Endothelial cell of umbilical vein (primary cell): ENCODE measurements at regions of chrX and their contacts with region 1.

Region 1: GRCh38 chrX:16589214-16589613 is 60.7 kb upstream of the S100G start:
- DNase-seq: peak; percentile 74
- H3K4me3 ChIP-seq: no peak overlapping the region
- H3K27ac ChIP-seq: no peak overlapping the region
- H3K4me1 ChIP-seq: peaks cover 12% of the 10 kb centered on the region
- H3K27me3 ChIP-seq: no peaks in the 10 kb centered on the region
- CTCF ChIP-seq: no peak
- POLR2A ChIP-seq: no peak

Region 2: DNA sequence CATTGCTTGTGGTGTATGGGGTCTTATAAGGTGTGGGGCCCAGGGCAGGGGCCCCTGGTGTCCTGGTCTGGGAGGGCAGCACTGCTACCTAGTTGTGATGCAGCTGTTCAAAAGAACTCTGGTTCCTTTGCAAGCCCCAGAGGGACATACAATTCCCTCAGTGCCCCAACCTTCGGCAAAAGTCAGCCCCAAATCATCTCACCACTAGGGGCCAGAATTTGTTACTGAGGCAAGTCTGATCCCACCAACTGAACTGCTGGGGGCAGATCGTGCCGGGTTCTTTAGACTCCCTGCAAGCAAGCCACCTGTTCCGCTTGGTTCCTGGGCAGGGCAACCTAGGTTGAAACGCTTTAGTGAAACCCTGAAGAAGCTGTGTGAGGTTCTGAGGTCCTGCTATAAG is 119.3 kb before region 1 on chrX:
- CTCF ChIA-PET with region 1: no interaction called
- POLR2A ChIA-PET with region 1: no interaction called
- dilution Hi-C with region 1: no loop called
- intact Hi-C with region 1: no loop called
- DNase-seq: no peak
- H3K4me3 ChIP-seq: no peak overlapping the region
- H3K27ac ChIP-seq: no peak overlapping the region
- H3K4me1 ChIP-seq: no peaks in the 10 kb centered on the region
- H3K27me3 ChIP-seq: no peaks in the 10 kb centered on the region
- CTCF ChIP-seq: no peak
- POLR2A ChIP-seq: no peak

Region 3: DNA sequence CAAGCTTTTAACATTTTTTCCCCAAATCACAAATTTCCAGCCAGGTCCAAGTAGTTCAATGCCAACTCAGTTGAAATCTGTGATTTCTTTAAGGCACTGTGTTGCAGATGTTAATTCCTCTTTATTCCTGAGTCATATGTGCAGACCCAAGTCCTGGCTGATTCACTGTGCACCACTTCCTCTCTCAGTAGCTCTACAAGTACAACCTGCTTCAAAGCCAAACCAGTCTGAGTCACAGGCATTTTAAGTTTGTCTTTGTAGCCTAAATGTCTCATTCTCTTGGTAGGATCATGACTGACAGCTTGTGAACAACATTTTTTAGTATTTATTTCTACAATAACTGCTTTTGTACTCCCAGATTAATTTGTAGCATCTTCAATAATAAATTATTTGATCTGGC is 104.9 kb before region 1 on chrX:
- CTCF ChIA-PET with region 1: no interaction called
- POLR2A ChIA-PET with region 1: no interaction called
- dilution Hi-C with region 1: no loop called
- intact Hi-C with region 1: loop called (anchors 10 kb)
- DNase-seq: peak; percentile 69
- H3K4me3 ChIP-seq: no peak overlapping the region
- H3K27ac ChIP-seq: no peak overlapping the region
- H3K4me1 ChIP-seq: peaks cover 7% of the 10 kb centered on the region
- H3K27me3 ChIP-seq: no peaks in the 10 kb centered on the region
- CTCF ChIP-seq: no peak
- POLR2A ChIP-seq: no peak

Region 4: GRCh38 chrX:16552546-16552945 is 36.7 kb before region 1 on chrX:
- CTCF ChIA-PET with region 1: no interaction called
- POLR2A ChIA-PET with region 1: no interaction called
- dilution Hi-C with region 1: no loop called
- intact Hi-C with region 1: no loop called
- DNase-seq: no peak
- H3K4me3 ChIP-seq: no peak overlapping the region
- H3K27ac ChIP-seq: no peak overlapping the region
- H3K4me1 ChIP-seq: no peaks in the 10 kb centered on the region
- H3K27me3 ChIP-seq: no peaks in the 10 kb centered on the region
- CTCF ChIP-seq: no peak
- POLR2A ChIP-seq: no peak